AG04450 (cell line): ENCODE measurements at regions of chr11 and their contacts with region 1.

Region 1: DNA sequence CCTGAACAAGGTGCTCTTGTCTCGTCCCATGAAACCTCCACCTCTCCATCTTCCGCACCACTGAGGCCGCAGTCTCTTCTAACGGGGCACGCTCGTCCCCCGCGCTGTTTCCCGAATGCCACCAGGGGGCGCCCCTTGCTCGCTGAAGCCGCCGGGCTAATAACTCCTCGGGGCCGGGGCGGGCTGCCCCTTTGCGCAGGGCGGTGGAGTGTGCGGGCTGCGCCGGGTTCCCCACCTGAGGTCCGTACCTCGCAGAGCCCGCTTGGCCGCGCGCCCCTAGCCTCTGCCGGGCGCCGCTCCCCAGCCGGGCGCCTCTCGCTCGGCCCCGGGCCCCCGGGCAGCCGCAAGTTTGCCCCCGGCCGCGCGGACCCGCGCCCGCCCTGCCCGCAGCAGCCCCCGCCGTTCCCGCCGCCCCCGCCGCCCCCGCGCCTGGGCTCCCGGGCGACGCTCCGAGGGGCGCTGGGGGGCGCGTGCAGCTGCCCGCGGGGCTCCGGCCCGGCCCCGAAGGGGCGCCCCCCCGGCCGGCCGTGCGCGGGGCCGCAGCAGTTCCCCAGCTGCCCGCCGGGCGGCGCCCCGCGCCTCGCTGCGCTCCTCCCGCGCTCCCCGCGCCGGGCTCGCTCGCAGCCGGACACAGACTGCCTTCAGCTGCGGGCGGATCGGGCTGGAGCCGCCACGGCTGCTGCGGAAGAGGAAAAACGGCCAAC is at the start of gene GRIK4:
- DNase-seq: no peak
- H3K4me3 ChIP-seq: peak within 1 kb of the TSS; percentile 57
- H3K27ac ChIP-seq: no peak within 1 kb of the TSS
- H3K27me3 ChIP-seq: peaks cover 9% of the 10 kb centered on the region
- CTCF ChIP-seq: peak; percentile 92
- polyA plus RNA-seq, gene GRIK4: 0.55 and 0.68 TPM in 2 replicates

Region 2: DNA sequence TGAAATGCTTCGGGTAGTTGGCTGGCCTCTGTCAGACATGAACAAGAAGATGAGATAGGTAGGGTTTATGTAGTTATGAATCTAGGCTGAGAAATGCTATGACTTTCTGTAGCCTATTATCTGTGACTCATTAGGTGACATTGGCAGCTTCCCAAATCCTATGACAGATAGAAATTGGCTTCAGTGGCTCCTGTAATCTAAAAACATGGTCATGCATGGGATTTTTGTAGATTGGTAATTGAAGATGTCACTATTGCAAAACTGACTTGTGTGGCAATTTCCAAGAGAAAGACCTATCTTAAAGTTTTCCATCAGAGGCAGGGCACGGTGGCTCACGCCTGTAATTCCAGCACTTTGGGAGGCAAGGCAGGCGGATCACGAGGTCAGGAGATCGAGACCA is 29.1 kb before region 1 on chr11:
- CTCF ChIA-PET with region 1: no interaction called
- POLR2A ChIA-PET with region 1: no interaction called
- DNase-seq: no peak
- H3K4me3 ChIP-seq: no peak overlapping the region
- H3K27ac ChIP-seq: no peak overlapping the region
- H3K27me3 ChIP-seq: no peaks in the 10 kb centered on the region
- CTCF ChIP-seq: no peak

Region 3: DNA sequence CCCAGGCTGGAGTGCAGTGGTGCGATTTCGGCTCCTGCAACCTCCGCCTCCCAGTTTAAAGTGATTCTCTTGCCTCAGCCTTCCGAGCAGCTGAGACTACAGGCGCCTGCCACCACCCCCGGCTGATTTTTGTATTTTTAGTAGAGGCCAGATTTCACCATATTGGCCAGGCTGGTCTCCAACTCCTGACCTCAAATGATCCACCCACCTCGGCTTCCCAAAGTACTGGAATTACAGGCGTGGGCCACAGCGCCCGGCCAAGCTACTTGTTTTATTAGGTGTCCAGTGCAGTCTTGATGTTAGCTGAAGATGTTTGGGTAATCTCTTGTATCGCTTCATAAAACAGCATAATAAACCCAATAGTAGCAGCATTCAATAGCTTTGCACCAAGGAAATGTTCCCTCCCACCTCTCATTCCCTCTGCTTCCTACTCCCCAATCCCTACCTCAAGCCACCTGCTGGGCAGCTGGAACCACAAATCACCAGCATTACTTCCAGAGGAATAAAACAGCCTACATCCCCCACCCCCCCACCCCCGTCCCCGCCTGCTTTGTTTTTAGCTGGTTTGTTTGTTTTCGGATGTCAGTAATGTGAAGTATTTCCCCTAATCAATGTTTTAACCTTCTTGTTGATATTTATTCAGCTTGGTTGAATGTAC is 10.7 kb before region 1 on chr11:
- CTCF ChIA-PET with region 1: interaction called, 18 read pairs
- POLR2A ChIA-PET with region 1: no interaction called
- DNase-seq: no peak
- H3K4me3 ChIP-seq: no peak overlapping the region
- H3K27ac ChIP-seq: no peak overlapping the region
- H3K27me3 ChIP-seq: no peaks in the 10 kb centered on the region
- CTCF ChIP-seq: no peak

Region 4: DNA sequence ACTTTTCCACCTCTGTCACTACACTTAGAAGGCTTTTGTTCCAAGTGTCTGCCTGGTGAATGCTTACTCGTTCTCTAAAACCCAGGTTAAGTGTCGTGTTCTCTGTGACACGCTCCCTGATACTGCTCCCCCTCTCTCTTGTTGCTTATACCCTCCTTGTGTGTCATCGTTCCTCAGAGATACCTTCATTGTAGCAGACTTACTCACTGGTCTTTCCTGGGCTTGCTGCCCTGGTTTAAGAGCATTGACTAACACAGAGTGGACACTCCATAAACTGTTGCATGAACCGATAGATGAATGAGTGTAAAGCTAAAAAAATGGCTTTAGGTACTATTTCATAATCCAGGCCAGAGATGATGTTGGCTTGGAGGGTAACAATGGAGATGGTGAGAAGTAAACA is 171.6 kb after region 1 on chr11:
- CTCF ChIA-PET with region 1: interaction called, 121 read pairs
- POLR2A ChIA-PET with region 1: no interaction called
- DNase-seq: peak; percentile 24
- H3K4me3 ChIP-seq: no peak overlapping the region
- H3K27ac ChIP-seq: no peak overlapping the region
- H3K27me3 ChIP-seq: peaks cover 5% of the 10 kb centered on the region
- CTCF ChIP-seq: no peak

Region 5: DNA sequence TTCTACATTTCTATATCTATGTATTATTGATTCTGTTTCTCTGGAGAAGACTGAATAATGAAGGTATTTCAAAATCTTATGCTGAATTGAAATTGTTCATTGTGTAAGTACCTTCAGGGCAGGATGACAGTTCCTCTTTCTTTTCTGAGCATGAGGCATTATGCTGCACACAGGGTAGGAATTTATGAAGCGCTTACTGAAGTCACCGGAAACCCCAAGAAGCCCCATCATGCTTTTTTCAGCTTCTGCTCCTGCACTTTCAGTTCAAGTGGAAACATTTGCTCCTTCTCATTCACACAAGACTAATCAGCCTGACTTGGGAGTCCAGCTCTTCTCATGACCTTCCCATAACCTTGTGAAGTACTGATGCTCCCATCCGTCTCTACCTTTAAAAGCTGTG is 1256.2 kb after region 1 on chr11:
- CTCF ChIA-PET with region 1: no interaction called
- POLR2A ChIA-PET with region 1: no interaction called
- DNase-seq: no peak
- H3K4me3 ChIP-seq: no peak overlapping the region
- H3K27ac ChIP-seq: no peak overlapping the region
- H3K27me3 ChIP-seq: no peaks in the 10 kb centered on the region
- CTCF ChIP-seq: no peak